Ascending aorta (tissue), 2 donors: ENCODE measurements at regions of chr1 and their contacts with region 1.

Region 1: GRCh38 chr1:58576727-58577653 is at the start of gene TACSTD2:
- DNase-seq: peak in 1 of 2 donors; percentile 74
- H3K4me3 ChIP-seq: peak within 1 kb of the TSS; percentile 59 to 71
- H3K27ac ChIP-seq: peak within 1 kb of the TSS in 1 of 2 donors; percentile 58
- H3K4me1 ChIP-seq: peaks cover 8 to 9% of the 10 kb centered on the region in 2 donors
- H3K27me3 ChIP-seq: no peaks in the 10 kb centered on the region
- CTCF ChIP-seq: no peak
- total RNA-seq, gene TACSTD2: 1.3 TPM

Region 2: DNA sequence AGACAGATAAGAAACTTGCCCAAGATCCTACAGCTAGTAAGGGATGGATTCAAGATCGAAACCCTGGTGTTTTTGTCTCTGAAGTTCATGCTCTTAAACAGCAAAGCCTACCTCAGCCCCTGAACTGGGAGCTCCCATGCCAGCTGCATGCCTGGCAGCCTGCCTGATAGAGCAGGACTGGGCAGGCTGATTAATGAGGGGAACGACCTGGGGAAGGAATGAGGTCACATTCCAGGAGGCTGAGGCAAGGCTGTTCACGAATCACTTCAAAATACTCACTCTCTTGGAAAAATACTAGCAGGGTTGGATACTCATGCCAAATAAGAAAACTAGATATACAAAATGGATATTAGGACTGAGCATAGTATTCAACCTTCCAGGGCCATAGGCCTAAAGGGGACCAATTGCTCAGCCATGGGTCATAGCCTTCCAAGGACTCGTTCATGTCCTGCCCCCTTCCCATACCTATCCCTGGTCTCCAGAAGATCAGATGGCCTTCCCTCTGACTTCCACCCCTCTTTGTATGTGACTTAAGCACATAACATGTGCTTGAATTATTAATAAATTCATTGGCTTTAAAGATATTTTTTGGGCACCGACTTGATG is 15.6 kb after region 1 on chr1:
- intact Hi-C with region 1: loop called (anchors 2 kb)
- DNase-seq: peak; percentile 49 to 95
- H3K4me3 ChIP-seq: no peak overlapping the region
- H3K27ac ChIP-seq: peak overlapping the region; percentile 79 to 88
- H3K4me1 ChIP-seq: peaks cover 6 to 35% of the 10 kb centered on the region in 2 donors
- H3K27me3 ChIP-seq: no peaks in the 10 kb centered on the region
- CTCF ChIP-seq: no peak

Region 3: GRCh38 chr1:58618303-58618702 is 41.3 kb after region 1 on chr1:
- intact Hi-C with region 1: loop called (anchors 1 kb)
- DNase-seq: peak; percentile 46 to 90
- H3K4me3 ChIP-seq: no peak overlapping the region
- H3K27ac ChIP-seq: peak overlapping the region; percentile 31 to 58
- H3K4me1 ChIP-seq: peaks cover 0 to 14% of the 10 kb centered on the region in 2 donors
- H3K27me3 ChIP-seq: no peaks in the 10 kb centered on the region
- CTCF ChIP-seq: no peak

Region 4: GRCh38 chr1:58699011-58699762 is 122.2 kb after region 1 on chr1:
- intact Hi-C with region 1: no loop called
- DNase-seq: no peak
- H3K4me3 ChIP-seq: peak overlapping the region; percentile 71 to 90
- H3K27ac ChIP-seq: peak overlapping the region; percentile 82 to 85
- H3K4me1 ChIP-seq: peaks cover 8% of the 10 kb centered on the region in 2 donors
- H3K27me3 ChIP-seq: no peaks in the 10 kb centered on the region
- CTCF ChIP-seq: no peak

Region 5: GRCh38 chr1:58727363-58727762 is 150.4 kb after region 1 on chr1:
- intact Hi-C with region 1: no loop called
- DNase-seq: no peak
- H3K4me3 ChIP-seq: no peak overlapping the region
- H3K27ac ChIP-seq: peak overlapping the region in 1 of 2 donors; percentile 12
- H3K4me1 ChIP-seq: peaks cover 0 to 2% of the 10 kb centered on the region in 2 donors
- H3K27me3 ChIP-seq: no peaks in the 10 kb centered on the region
- CTCF ChIP-seq: no peak

Region 6: DNA sequence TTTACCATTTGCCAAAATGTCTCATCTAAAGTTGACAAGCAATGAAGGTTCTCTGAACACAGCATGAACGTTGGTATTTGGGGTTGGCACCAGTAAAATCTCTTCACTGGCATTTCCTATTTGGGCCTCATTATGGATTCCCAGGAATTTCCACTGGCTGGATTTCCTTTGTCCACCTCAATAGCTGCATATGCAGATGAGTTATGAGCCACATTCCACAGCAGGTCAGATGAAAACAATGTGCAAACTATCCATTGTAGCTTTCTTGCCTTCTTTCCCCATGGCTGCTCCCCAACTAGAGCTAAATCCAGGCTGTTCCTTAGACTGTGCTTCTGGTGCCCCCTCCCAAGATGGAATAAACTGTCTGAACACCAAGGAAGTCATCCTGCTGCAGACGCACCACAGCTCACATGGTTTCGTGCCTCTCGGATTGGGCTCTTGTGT is 551.8 kb after region 1 on chr1:
- intact Hi-C with region 1: no loop called
- DNase-seq: no peak
- H3K4me3 ChIP-seq: no peak overlapping the region
- H3K27ac ChIP-seq: no peak overlapping the region
- H3K4me1 ChIP-seq: no peaks in the 10 kb centered on the region
- H3K27me3 ChIP-seq: no peaks in the 10 kb centered on the region
- CTCF ChIP-seq: no peak